ENCODE measurements at regions of chr7 and their contacts with region 1.

Region 1: GRCh38 chr7:140673063-140673773 is 473 bp downstream of the ADCK2 start:
- DNase-seq: peak; percentile 36 to 78 (median 61)
- H3K4me3 ChIP-seq: peak overlapping the region; percentile 82
- H3K4me3 Mint-ChIP-seq: peak overlapping the region; percentile 82 to 94 (median 88)
- H3K27ac ChIP-seq: peak overlapping the region; percentile 83
- H3K27ac Mint-ChIP-seq: peak overlapping the region; percentile 71 to 97 (median 88)
- H3K4me1 ChIP-seq: peaks cover 32% of the 10 kb centered on the region
- H3K4me1 Mint-ChIP-seq: peaks cover 28 to 45% (median 34%) of the 10 kb centered on the region in 3 donors
- H3K27me3 ChIP-seq: no peaks in the 10 kb centered on the region
- H3K27me3 Mint-ChIP-seq: no peaks in the 10 kb centered on the region

Region 2: GRCh38 chr7:140696680-140697446 is 23.6 kb after region 1 on chr7 and contains the start of gene NDUFB2:
- CTCF ChIA-PET with region 1: interaction called, 3 read pairs
- POLR2A ChIA-PET with region 1: interaction called, 11 read pairs
- DNase-seq: peak; percentile 57 to 90 (median 80)
- H3K4me3 ChIP-seq: peak within 1 kb of the TSS; percentile 93
- H3K4me3 Mint-ChIP-seq: peak within 1 kb of the TSS; percentile 90 to 99 (median 96)
- H3K27ac ChIP-seq: peak within 1 kb of the TSS; percentile 77
- H3K27ac Mint-ChIP-seq: peak within 1 kb of the TSS; percentile 93 to 99 (median 97)
- H3K4me1 ChIP-seq: peaks cover 25% of the 10 kb centered on the region
- H3K4me1 Mint-ChIP-seq: peaks cover 35 to 49% (median 45%) of the 10 kb centered on the region in 3 donors
- H3K27me3 ChIP-seq: no peaks in the 10 kb centered on the region
- H3K27me3 Mint-ChIP-seq: peaks cover 0 to 6% of the 10 kb centered on the region in 2 donors
- total RNA-seq, gene NDUFB2: 209 to 231 TPM

Measured in CD8-positive, alpha-beta memory T cell (primary cell).